Naive thymus-derived CD4-positive, alpha-beta T cell (primary cell): ENCODE measurements at regions of chr2 and their contacts with region 1.

Region 1: GRCh38 chr2:214809751-214810564 is 475 bp upstream of the BARD1 start:
- DNase-seq: peak; percentile 75 to 100 (median 84)
- ATAC-seq: peak; percentile 89
- H3K4me3 ChIP-seq: peak overlapping the region; percentile 75
- H3K4me3 Mint-ChIP-seq: peak overlapping the region; percentile 88 to 98 (median 96)
- H3K27ac ChIP-seq: peak overlapping the region; percentile 72
- H3K27ac Mint-ChIP-seq: peak overlapping the region in 8 of 9 donors; percentile 56 to 95 (median 85)
- H3K4me1 ChIP-seq: peaks cover 0 to 7% of the 10 kb centered on the region in 2 donors
- H3K4me1 Mint-ChIP-seq: peaks cover 10 to 43% (median 35%) of the 10 kb centered on the region in 7 donors
- H3K27me3 ChIP-seq: no peaks in the 10 kb centered on the region
- H3K27me3 Mint-ChIP-seq: peaks cover 0 to 28% (median 9%) of the 10 kb centered on the region in 5 donors

Region 2: GRCh38 chr2:213284105-213285090 is 1525.6 kb before region 1 on chr2 and contains the start of gene SPAG16:
- CTCF ChIA-PET with region 1: no interaction called
- POLR2A ChIA-PET with region 1: no interaction called
- intact Hi-C with region 1: loop called (anchors 1 kb)
- DNase-seq: peak; percentile 85 to 96 (median 95)
- ATAC-seq: peak; percentile 98
- H3K4me3 ChIP-seq: peak within 1 kb of the TSS; percentile 90
- H3K4me3 Mint-ChIP-seq: peak within 1 kb of the TSS; percentile 88 to 99 (median 95)
- H3K27ac ChIP-seq: peak within 1 kb of the TSS; percentile 69
- H3K27ac Mint-ChIP-seq: peak within 1 kb of the TSS; percentile 78 to 97 (median 92)
- H3K4me1 ChIP-seq: peaks cover 13 to 15% of the 10 kb centered on the region in 2 donors
- H3K4me1 Mint-ChIP-seq: peaks cover 12 to 49% (median 34%) of the 10 kb centered on the region in 7 donors
- H3K27me3 ChIP-seq: no peaks in the 10 kb centered on the region
- H3K27me3 Mint-ChIP-seq: peaks cover 0 to 6% (median 0%) of the 10 kb centered on the region in 5 donors
- total RNA-seq, gene SPAG16: 4.7 to 9.7 (median 6.2) TPM

Region 3: GRCh38 chr2:214740868-214741395 is 69.0 kb before region 1 on chr2:
- CTCF ChIA-PET with region 1: no interaction called
- POLR2A ChIA-PET with region 1: no interaction called
- intact Hi-C with region 1: loop called in 1 of 2 experiments (anchors 5 kb)
- DNase-seq: no peak
- ATAC-seq: no peak
- H3K4me3 ChIP-seq: no peak overlapping the region
- H3K4me3 Mint-ChIP-seq: no peak overlapping the region
- H3K27ac ChIP-seq: no peak overlapping the region
- H3K27ac Mint-ChIP-seq: no peak overlapping the region
- H3K4me1 ChIP-seq: no peaks in the 10 kb centered on the region
- H3K4me1 Mint-ChIP-seq: peaks cover 0 to 9% (median 5%) of the 10 kb centered on the region in 7 donors
- H3K27me3 ChIP-seq: no peaks in the 10 kb centered on the region
- H3K27me3 Mint-ChIP-seq: no peaks in the 10 kb centered on the region

Region 4: DNA sequence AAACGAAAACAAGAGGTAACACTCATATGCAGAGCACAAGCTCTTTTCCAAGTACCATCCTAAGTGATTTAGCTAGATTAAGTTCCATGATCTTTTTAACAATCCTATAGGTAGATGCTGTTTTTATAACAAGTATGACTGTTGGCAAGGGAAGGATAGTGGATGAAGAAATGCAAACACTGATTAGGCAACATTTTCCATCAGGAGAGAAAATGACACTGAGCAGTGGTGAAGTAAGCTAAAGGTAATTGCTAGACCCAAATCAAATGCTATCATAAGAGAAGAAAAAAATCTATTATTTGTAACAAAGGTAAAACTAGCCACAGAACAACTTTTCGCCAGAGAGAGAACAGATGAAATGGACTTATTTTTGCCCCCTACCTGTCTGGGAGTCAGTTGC is 33.9 kb after region 1 on chr2:
- CTCF ChIA-PET with region 1: no interaction called
- POLR2A ChIA-PET with region 1: no interaction called
- intact Hi-C with region 1: no loop called
- DNase-seq: no peak
- ATAC-seq: no peak
- H3K4me3 ChIP-seq: no peak overlapping the region
- H3K4me3 Mint-ChIP-seq: no peak overlapping the region
- H3K27ac ChIP-seq: no peak overlapping the region
- H3K27ac Mint-ChIP-seq: no peak overlapping the region
- H3K4me1 ChIP-seq: no peaks in the 10 kb centered on the region
- H3K4me1 Mint-ChIP-seq: no peaks in the 10 kb centered on the region
- H3K27me3 ChIP-seq: no peaks in the 10 kb centered on the region
- H3K27me3 Mint-ChIP-seq: peaks cover 0 to 5% (median 0%) of the 10 kb centered on the region in 5 donors

Region 5: DNA sequence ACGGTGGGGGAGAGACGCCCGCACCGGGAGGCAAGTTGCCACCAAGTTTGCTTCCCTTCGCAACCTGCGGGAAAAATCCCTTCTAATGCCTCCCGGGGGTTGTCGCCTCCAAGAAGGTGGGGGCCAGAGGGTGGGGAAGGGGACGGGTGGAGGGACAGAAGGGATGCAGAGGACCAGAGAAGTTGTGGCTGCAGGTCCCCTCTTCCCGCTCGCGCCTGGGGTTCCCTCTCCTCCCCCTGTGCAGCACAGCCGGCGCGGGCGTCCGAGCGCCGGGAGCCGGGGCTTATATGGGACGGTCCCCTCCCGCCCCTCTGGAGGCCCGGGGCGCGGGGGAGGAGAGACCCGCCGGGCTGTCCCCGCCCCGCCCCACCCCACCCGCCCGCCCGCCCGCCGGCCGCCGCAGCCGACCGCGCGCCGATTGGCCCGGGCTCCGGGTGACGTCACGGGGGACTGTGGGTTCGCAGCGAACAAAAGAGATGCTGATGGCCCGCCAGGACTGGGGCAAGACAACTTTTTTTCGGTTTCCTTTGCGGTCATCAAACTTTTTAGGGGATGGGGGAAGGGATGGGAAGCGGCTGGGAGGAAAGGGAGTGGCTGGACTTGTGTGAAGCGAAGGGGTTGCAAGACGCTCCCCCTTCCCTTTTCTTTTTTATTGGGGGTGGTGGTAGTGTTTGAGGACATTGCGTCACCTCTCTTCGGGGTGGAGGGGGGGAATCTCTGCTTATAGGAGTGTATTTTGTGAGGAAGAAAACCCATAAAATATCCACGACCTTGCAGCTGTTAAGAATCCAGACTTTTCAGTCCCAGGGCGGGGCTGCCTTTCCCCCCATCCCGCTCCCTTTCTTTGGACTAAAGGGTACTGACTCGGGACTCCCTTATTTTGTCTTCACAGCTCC is 626.1 kb after region 1 on chr2 and contains the start of gene FN1:
- CTCF ChIA-PET with region 1: no interaction called
- POLR2A ChIA-PET with region 1: no interaction called
- intact Hi-C with region 1: loop called in 1 of 2 experiments (anchors 10 kb)
- DNase-seq: peak; percentile 26 to 76 (median 38)
- ATAC-seq: peak; percentile 72
- H3K4me3 ChIP-seq: peak within 1 kb of the TSS; percentile 47
- H3K4me3 Mint-ChIP-seq: peak within 1 kb of the TSS; percentile 77 to 89 (median 82)
- H3K27ac ChIP-seq: no peak within 1 kb of the TSS
- H3K27ac Mint-ChIP-seq: peak within 1 kb of the TSS in 2 of 9 donors; percentile 41 to 71
- H3K4me1 ChIP-seq: peaks cover 8 to 15% of the 10 kb centered on the region in 2 donors
- H3K4me1 Mint-ChIP-seq: peaks cover 10 to 22% (median 21%) of the 10 kb centered on the region in 7 donors
- H3K27me3 ChIP-seq: peaks cover 12 to 24% of the 10 kb centered on the region in 2 donors
- H3K27me3 Mint-ChIP-seq: peaks cover 58 to 80% (median 73%) of the 10 kb centered on the region in 5 donors
- total RNA-seq, gene FN1: 0.13 to 2.2 (median 0.81) TPM

Region 6: DNA sequence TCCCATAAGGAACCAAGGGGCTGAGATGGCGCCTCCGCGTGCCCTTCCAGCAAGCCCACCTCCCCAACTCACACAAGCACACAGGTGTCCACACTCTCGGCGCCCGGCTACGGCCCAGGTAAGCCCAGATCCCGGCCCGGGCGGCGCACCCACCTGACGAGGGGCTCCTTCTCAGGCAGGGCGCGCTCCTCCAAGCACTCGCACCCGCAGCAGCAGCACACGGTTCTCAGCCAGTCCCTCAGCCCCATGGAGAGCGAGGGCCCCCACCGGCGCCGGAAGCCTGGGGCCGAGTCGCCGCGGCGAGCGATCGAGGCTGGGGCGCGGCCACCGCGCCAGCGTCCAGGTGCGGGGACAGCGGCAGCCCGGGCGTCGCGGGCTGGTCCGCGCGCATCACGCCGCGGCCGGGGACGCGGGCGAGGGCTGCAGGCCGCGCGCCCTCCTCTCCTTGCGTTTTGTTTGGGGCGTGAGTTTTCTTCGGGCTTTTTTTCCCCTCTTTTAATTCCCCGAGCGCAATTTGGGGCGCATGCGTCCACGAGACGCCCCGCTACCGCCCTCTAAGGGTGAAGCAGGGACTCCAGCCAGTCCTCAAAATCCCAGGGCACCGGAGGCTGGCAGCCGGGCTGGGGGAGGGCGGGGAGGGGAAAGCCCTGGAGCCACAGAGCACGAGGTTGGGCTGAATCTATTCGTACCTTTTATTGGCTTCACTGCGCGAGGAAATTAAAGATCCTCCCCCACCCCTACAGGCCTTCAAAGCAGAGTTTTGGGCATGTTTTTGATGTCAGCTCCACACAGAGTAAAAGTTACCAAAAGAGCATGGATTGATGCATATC is 1203.3 kb after region 1 on chr2 and contains the start of gene MREG:
- CTCF ChIA-PET with region 1: no interaction called
- POLR2A ChIA-PET with region 1: no interaction called
- intact Hi-C with region 1: loop called (anchors 2 to 5 kb)
- DNase-seq: peak; percentile 67 to 84 (median 80)
- ATAC-seq: peak; percentile 90
- H3K4me3 ChIP-seq: peak within 1 kb of the TSS; percentile 65
- H3K4me3 Mint-ChIP-seq: peak within 1 kb of the TSS; percentile 82 to 93 (median 89)
- H3K27ac ChIP-seq: peak within 1 kb of the TSS; percentile 59
- H3K27ac Mint-ChIP-seq: peak within 1 kb of the TSS; percentile 33 to 91 (median 74)
- H3K4me1 ChIP-seq: peaks cover 30 to 31% of the 10 kb centered on the region in 2 donors
- H3K4me1 Mint-ChIP-seq: peaks cover 27 to 70% (median 53%) of the 10 kb centered on the region in 7 donors
- H3K27me3 ChIP-seq: no peaks in the 10 kb centered on the region
- H3K27me3 Mint-ChIP-seq: peaks cover 0 to 4% (median 0%) of the 10 kb centered on the region in 5 donors
- total RNA-seq, gene MREG: 4.8 to 8.5 (median 6.4) TPM

Region 7: GRCh38 chr2:216108967-216109921 is 1299.3 kb after region 1 on chr2 and contains the start of gene XRCC5:
- CTCF ChIA-PET with region 1: no interaction called
- POLR2A ChIA-PET with region 1: no interaction called
- intact Hi-C with region 1: loop called (anchors 1 kb)
- DNase-seq: peak; percentile 95 to 97 (median 97)
- ATAC-seq: peak; percentile 93
- H3K4me3 ChIP-seq: peak within 1 kb of the TSS; percentile 96
- H3K4me3 Mint-ChIP-seq: peak within 1 kb of the TSS; percentile 96 to 100 (median 100)
- H3K27ac ChIP-seq: peak within 1 kb of the TSS; percentile 95
- H3K27ac Mint-ChIP-seq: peak within 1 kb of the TSS; percentile 97 to 100 (median 100)
- H3K4me1 ChIP-seq: peaks cover 24 to 30% of the 10 kb centered on the region in 2 donors
- H3K4me1 Mint-ChIP-seq: peaks cover 20 to 57% (median 52%) of the 10 kb centered on the region in 7 donors
- H3K27me3 ChIP-seq: no peaks in the 10 kb centered on the region
- H3K27me3 Mint-ChIP-seq: peaks cover 0 to 4% (median 0%) of the 10 kb centered on the region in 5 donors
- total RNA-seq, gene XRCC5: 168 to 347 (median 228) TPM

Region 8: GRCh38 chr2:216242365-216242764 is 1432.4 kb after region 1 on chr2:
- CTCF ChIA-PET with region 1: no interaction called
- POLR2A ChIA-PET with region 1: no interaction called
- intact Hi-C with region 1: no loop called
- DNase-seq: no peak
- ATAC-seq: no peak
- H3K4me3 ChIP-seq: no peak overlapping the region
- H3K4me3 Mint-ChIP-seq: no peak overlapping the region
- H3K27ac ChIP-seq: no peak overlapping the region
- H3K27ac Mint-ChIP-seq: no peak overlapping the region
- H3K4me1 ChIP-seq: no peaks in the 10 kb centered on the region
- H3K4me1 Mint-ChIP-seq: peaks cover 0 to 7% (median 6%) of the 10 kb centered on the region in 7 donors
- H3K27me3 ChIP-seq: no peaks in the 10 kb centered on the region
- H3K27me3 Mint-ChIP-seq: no peaks in the 10 kb centered on the region

Region 9: GRCh38 chr2:216498418-216499413 is 1688.8 kb after region 1 on chr2 and contains the start of gene RPL37A:
- CTCF ChIA-PET with region 1: no interaction called
- POLR2A ChIA-PET with region 1: no interaction called
- intact Hi-C with region 1: loop called in 1 of 2 experiments (anchors 5 kb)
- DNase-seq: peak; percentile 81 to 91 (median 87)
- ATAC-seq: peak; percentile 98
- H3K4me3 ChIP-seq: peak within 1 kb of the TSS; percentile 95
- H3K4me3 Mint-ChIP-seq: peak within 1 kb of the TSS; percentile 94 to 100 (median 98)
- H3K27ac ChIP-seq: peak within 1 kb of the TSS; percentile 89
- H3K27ac Mint-ChIP-seq: peak within 1 kb of the TSS; percentile 92 to 98 (median 93)
- H3K4me1 ChIP-seq: peaks cover 19 to 24% of the 10 kb centered on the region in 2 donors
- H3K4me1 Mint-ChIP-seq: peaks cover 22 to 61% (median 50%) of the 10 kb centered on the region in 7 donors
- H3K27me3 ChIP-seq: no peaks in the 10 kb centered on the region
- H3K27me3 Mint-ChIP-seq: peaks cover 0 to 3% (median 0%) of the 10 kb centered on the region in 5 donors
- total RNA-seq, gene RPL37A: 2,173 to 3,712 (median 3,236) TPM